Activated naive CD4-positive, alpha-beta T cell treated with anti-CD3 and anti-CD28 coated beads for 36 hours (primary cell): ENCODE measurements at regions of chr2 and their contacts with region 1.

Region 1: GRCh38 chr2:135948642-135949355 is 36.6 kb downstream of the DARS1 start:
- DNase-seq: peak; percentile 35
- H3K4me3 Mint-ChIP-seq: no peak overlapping the region
- H3K27ac Mint-ChIP-seq: peak overlapping the region; percentile 74
- H3K4me1 Mint-ChIP-seq: peaks cover 45% of the 10 kb centered on the region
- H3K27me3 Mint-ChIP-seq: no peaks in the 10 kb centered on the region

Region 2: DNA sequence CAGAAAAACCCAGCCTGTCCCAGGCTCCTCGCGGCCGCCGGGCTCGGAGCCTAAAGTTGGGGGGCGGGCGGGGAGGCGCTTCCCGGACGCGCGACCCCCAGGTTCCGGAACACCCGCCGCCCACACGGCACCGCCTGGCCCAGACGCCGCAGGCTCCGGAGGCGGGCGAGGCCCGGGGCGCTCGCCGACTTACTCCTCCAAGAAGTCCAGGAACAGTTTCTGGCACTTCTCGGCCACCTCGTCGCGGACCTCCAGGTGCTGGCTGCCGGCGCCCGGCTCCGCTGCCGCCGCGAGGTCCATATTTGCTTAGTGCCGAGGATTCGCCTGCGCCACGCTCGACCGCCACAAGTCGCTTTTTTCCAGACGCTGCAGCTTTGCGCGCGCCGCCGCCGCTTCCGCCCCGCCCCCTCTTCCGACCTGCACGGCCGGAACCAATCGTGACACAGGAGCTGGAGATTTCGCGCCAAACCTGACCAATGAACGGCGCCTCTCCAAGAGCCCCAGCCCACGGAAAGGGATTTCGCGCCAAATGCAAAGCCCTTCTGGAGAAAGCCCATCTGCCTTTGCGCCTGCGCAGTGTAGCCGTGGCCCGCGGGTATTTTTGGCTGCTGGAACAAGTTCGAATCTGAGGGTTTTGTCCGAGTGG is 72.6 kb before region 1 on chr2 and contains the start of gene MCM6:
- CTCF ChIA-PET with region 1: no interaction called
- intact Hi-C with region 1: loop called (anchors 2 kb)
- DNase-seq: peak; percentile 100
- H3K4me3 Mint-ChIP-seq: peak within 1 kb of the TSS; percentile 91
- H3K27ac Mint-ChIP-seq: peak within 1 kb of the TSS; percentile 99
- H3K4me1 Mint-ChIP-seq: peaks cover 39% of the 10 kb centered on the region
- H3K27me3 Mint-ChIP-seq: no peaks in the 10 kb centered on the region
- total RNA-seq, gene MCM6: 221 to 226 TPM

Region 3: GRCh38 chr2:135960656-135961551 is 12.1 kb after region 1 on chr2:
- CTCF ChIA-PET with region 1: interaction called, 3 read pairs
- intact Hi-C with region 1: loop called (anchors 1 kb)
- DNase-seq: no peak
- H3K4me3 Mint-ChIP-seq: no peak overlapping the region
- H3K27ac Mint-ChIP-seq: no peak overlapping the region
- H3K4me1 Mint-ChIP-seq: peaks cover 44% of the 10 kb centered on the region
- H3K27me3 Mint-ChIP-seq: no peaks in the 10 kb centered on the region

Region 4: GRCh38 chr2:136008205-136008865 is 59.5 kb after region 1 on chr2:
- CTCF ChIA-PET with region 1: interaction called, 3 read pairs
- intact Hi-C with region 1: loop called (anchors 2 kb)
- DNase-seq: peak; percentile 73
- H3K4me3 Mint-ChIP-seq: no peak overlapping the region
- H3K27ac Mint-ChIP-seq: peak overlapping the region; percentile 15
- H3K4me1 Mint-ChIP-seq: peaks cover 38% of the 10 kb centered on the region
- H3K27me3 Mint-ChIP-seq: no peaks in the 10 kb centered on the region

Region 5: GRCh38 chr2:136059036-136059472 is 110.3 kb after region 1 on chr2:
- CTCF ChIA-PET with region 1: no interaction called
- intact Hi-C with region 1: loop called (anchors 1 kb)
- DNase-seq: no peak
- H3K4me3 Mint-ChIP-seq: no peak overlapping the region
- H3K27ac Mint-ChIP-seq: no peak overlapping the region
- H3K4me1 Mint-ChIP-seq: peaks cover 59% of the 10 kb centered on the region
- H3K27me3 Mint-ChIP-seq: no peaks in the 10 kb centered on the region

Region 6: DNA sequence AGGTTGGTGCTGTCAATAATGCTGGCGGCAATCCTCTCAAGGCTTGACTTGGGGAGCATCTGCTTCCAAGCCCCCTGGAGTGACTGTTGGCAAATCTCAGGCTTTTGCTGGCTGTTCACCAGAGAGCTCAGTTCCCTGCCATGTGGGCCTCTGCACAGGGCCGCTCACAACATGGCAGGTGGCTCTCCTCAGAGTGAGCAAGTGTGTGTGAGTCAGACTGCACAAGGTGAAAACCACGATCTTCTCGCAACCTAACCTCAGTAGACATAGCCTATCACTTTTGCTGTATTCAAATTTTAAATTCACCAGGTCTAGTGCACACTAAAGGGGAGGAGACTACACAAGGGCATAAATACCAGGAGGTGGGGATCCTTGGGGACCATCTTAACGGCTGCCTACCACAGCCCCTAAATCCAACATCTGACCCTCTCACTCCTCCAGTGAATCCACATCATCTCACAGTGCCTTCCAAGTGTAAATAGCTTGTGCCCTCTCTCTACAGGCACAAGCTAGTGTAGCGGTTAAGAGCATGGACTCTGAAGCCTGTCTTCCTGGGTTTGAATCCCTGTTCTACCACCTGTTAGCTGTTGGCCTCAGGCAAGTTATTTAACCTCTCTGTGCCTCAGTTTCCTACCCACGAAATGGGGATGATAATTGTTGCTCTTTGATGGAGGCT is 356.9 kb after region 1 on chr2:
- CTCF ChIA-PET with region 1: no interaction called
- intact Hi-C with region 1: loop called (anchors 1 kb)
- DNase-seq: peak; percentile 85
- H3K4me3 Mint-ChIP-seq: no peak overlapping the region
- H3K27ac Mint-ChIP-seq: peak overlapping the region; percentile 81
- H3K4me1 Mint-ChIP-seq: peaks cover 21% of the 10 kb centered on the region
- H3K27me3 Mint-ChIP-seq: no peaks in the 10 kb centered on the region

Region 7: GRCh38 chr2:136362676-136363390 is 414.0 kb after region 1 on chr2:
- CTCF ChIA-PET with region 1: no interaction called
- intact Hi-C with region 1: loop called (anchors 1 kb)
- DNase-seq: peak; percentile 68
- H3K4me3 Mint-ChIP-seq: no peak overlapping the region
- H3K27ac Mint-ChIP-seq: peak overlapping the region; percentile 42
- H3K4me1 Mint-ChIP-seq: peaks cover 51% of the 10 kb centered on the region
- H3K27me3 Mint-ChIP-seq: peaks cover 4% of the 10 kb centered on the region